H1 (cell line): ENCODE measurements at regions of chr10 and their contacts with region 1.

Region 1: GRCh38 chr10:73246783-73247508 is at the start of gene DNAJC9:
- DNase-seq: peak; percentile 95 to 99
- H3K4me3 ChIP-seq: peak within 1 kb of the TSS; percentile 57 to 92 (median 86)
- H3K27ac ChIP-seq: peak within 1 kb of the TSS; percentile 95
- H3K4me1 ChIP-seq: peaks cover 0 to 4% (median 3%) of the 10 kb centered on the region in 4 experiments; a peak in 5 of 7 replicates
- H3K27me3 ChIP-seq: no peaks in the 10 kb centered on the region
- CTCF ChIP-seq: no peak
- EP300 ChIP-seq: no peak
- POLR2A ChIP-seq: peak; percentile 97 to 100
- RAD21 ChIP-seq: no peak
- total RNA-seq, gene DNAJC9: 29.2 and 32.2 TPM in 2 replicates

Region 2: GRCh38 chr10:73117976-73118743 is 128.8 kb before region 1 on chr10:
- CTCF ChIA-PET with region 1: no interaction called
- POLR2A ChIA-PET with region 1: no interaction called
- DNase-seq: no peak
- H3K4me3 ChIP-seq: peak overlapping the region in 1 of 4 experiments; percentile 1; a peak in 1 of 8 replicates
- H3K27ac ChIP-seq: no peak overlapping the region; the same call in 1 of the 2 replicates
- H3K4me1 ChIP-seq: 0 out of 7 replicates have a peak, but pooled peaks cover 0 to 3% (median under 1%) of the 10 kb centered on the region in 4 experiments
- H3K27me3 ChIP-seq: no peaks in the 10 kb centered on the region
- CTCF ChIP-seq: no peak
- EP300 ChIP-seq: no peak
- POLR2A ChIP-seq: no peak
- RAD21 ChIP-seq: no peak

Region 3: GRCh38 chr10:73232887-73233286 is 14.1 kb before region 1 on chr10:
- CTCF ChIA-PET with region 1: interaction called, 4 read pairs
- POLR2A ChIA-PET with region 1: interaction called, 62 read pairs
- DNase-seq: no peak
- H3K4me3 ChIP-seq: no peak overlapping the region
- H3K27ac ChIP-seq: no peak overlapping the region
- H3K4me1 ChIP-seq: no peaks in the 10 kb centered on the region
- H3K27me3 ChIP-seq: no peaks in the 10 kb centered on the region
- CTCF ChIP-seq: peak; percentile 27 to 53 (median 48)
- EP300 ChIP-seq: no peak
- POLR2A ChIP-seq: no peak
- RAD21 ChIP-seq: peak; percentile 39 to 50; a peak in 3 of 4 replicates

Region 4: GRCh38 chr10:73358331-73359279 is 111.7 kb after region 1 on chr10 and contains the start of gene CFAP70:
- CTCF ChIA-PET with region 1: no interaction called
- POLR2A ChIA-PET with region 1: interaction called, 15 read pairs
- DNase-seq: peak; percentile 85 to 91
- H3K4me3 ChIP-seq: peak within 1 kb of the TSS; percentile 72 to 81 (median 74)
- H3K27ac ChIP-seq: peak within 1 kb of the TSS; percentile 28; the same call in 1 of the 2 replicates
- H3K4me1 ChIP-seq: peaks cover 0 to 2% (median 0%) of the 10 kb centered on the region in 4 experiments; a peak in 2 of 7 replicates
- H3K27me3 ChIP-seq: no peaks in the 10 kb centered on the region
- CTCF ChIP-seq: no peak; a peak in 1 of 4 replicates
- EP300 ChIP-seq: no peak
- POLR2A ChIP-seq: peak; percentile 51 to 88
- RAD21 ChIP-seq: no peak
- total RNA-seq, gene CFAP70: 0.27 and 0.30 TPM in 2 replicates

Region 5: GRCh38 chr10:73413528-73414229 is 166.7 kb after region 1 on chr10 and contains the start of gene ANXA7:
- CTCF ChIA-PET with region 1: no interaction called
- POLR2A ChIA-PET with region 1: interaction called, 21 read pairs
- DNase-seq: peak; percentile 62 to 95
- H3K4me3 ChIP-seq: peak within 1 kb of the TSS; percentile 88 to 99 (median 92)
- H3K27ac ChIP-seq: peak within 1 kb of the TSS; percentile 91
- H3K4me1 ChIP-seq: peaks cover 2 to 8% (median 4%) of the 10 kb centered on the region in 4 experiments; a peak in 5 of 7 replicates
- H3K27me3 ChIP-seq: no peaks in the 10 kb centered on the region
- CTCF ChIP-seq: peak in 1 of 3 experiments; percentile 1; a peak in 1 of 4 replicates
- EP300 ChIP-seq: no peak
- POLR2A ChIP-seq: peak; percentile 79 to 80
- RAD21 ChIP-seq: no peak
- total RNA-seq, gene ANXA7: 59.9 and 63.6 TPM in 2 replicates

Region 6: GRCh38 chr10:73495884-73496674 is 249.1 kb after region 1 on chr10 and contains the start of gene PPP3CB:
- CTCF ChIA-PET with region 1: no interaction called
- POLR2A ChIA-PET with region 1: interaction called, 12 read pairs
- DNase-seq: peak; percentile 76 to 87
- H3K4me3 ChIP-seq: peak within 1 kb of the TSS; percentile 70 to 97 (median 84)
- H3K27ac ChIP-seq: peak within 1 kb of the TSS; percentile 71
- H3K4me1 ChIP-seq: peaks cover 4 to 5% (median 4%) of the 10 kb centered on the region in 4 experiments; a peak in 6 of 7 replicates
- H3K27me3 ChIP-seq: no peaks in the 10 kb centered on the region
- CTCF ChIP-seq: no peak
- EP300 ChIP-seq: 0 out of 3 replicates have a peak, but pooled peaks of 1 of the 2 experiments have one; percentile 32
- POLR2A ChIP-seq: peak in 1 of 2 experiments; percentile 21; a peak in 1 of 3 replicates
- RAD21 ChIP-seq: no peak
- total RNA-seq, gene PPP3CB: 32.3 and 36.3 TPM in 2 replicates